Tibial artery (tissue), 4 donors: ENCODE measurements at regions of chr1 and their contacts with region 1.

Region 1: DNA sequence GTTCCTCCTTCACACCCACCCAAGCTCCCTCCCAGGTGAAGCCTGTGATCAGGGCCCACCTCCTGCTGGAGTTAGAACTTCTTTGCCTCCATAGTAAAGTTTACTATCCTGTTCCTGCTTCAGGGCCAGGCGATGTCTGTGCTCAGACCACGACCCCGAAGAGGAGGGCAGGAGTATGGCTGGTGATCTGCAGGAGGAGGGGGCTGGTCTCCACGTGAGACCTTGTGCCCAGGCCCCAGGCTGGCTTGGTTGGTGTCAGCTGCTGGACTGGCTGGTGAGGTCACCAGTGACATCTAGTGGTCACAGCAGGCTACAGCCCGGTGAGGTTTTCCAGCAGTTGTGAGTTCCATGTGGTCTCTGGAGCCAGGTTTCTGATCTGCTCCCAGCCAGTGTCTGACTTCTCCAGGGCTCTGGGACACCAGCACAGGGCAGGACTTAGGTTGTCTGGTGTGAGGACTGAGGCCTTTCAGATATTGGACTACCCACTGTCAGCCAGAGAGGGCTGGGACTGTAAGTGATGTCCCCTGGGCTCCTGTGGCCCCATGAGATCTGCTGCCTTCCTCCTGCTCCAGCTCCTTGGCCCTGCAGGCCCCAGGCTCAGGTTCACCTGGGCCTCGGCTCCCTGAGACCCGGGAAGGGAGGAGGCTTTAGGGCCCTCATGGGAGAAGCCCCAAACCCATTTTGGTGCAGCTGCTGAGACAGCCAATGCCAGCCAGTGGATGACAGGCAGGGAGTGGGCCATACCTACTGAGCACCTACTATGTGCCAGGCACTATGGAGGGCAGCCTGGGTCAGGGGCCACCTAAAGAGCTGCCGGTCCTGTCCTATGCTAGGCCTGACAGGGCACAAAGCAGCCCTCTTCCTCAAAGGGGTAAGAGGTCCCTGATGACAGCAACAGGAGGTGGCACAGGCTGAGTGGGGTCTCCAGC is 6.0 kb upstream of the UBL4B start:
- DNase-seq: peak; percentile 59 to 80
- H3K4me3 ChIP-seq: no peak overlapping the region
- H3K27ac ChIP-seq: no peak overlapping the region
- H3K4me1 ChIP-seq: no peaks in the 10 kb centered on the region
- H3K27me3 ChIP-seq: peaks cover 0 to 6% of the 10 kb centered on the region in 2 donors
- CTCF ChIP-seq: peak; percentile 85 to 94

Region 2: DNA sequence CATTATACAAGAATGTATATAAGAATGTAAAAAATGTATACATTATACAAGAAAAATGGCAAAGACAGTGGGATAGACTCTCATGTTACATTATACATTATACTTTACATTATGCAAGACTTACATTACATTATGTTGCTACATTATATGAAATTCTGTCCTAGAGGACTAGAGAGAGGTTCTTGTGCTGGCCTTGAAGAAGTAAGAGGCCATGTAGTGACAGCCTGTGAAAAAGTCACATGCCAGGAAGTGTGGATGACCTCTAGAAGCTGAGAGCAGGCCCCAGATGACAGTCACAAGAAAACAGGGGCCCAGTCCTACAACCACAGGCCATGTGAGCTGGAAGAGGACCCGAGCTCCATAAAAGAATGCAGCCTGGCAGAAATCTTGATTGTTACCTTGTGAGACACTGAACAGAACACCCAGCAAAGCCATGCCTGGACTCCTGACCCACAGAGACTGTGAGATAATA is 152.2 kb before region 1 on chr1:
- intact Hi-C with region 1: no loop called
- DNase-seq: no peak
- H3K4me3 ChIP-seq: no peak overlapping the region
- H3K27ac ChIP-seq: no peak overlapping the region
- H3K4me1 ChIP-seq: no peaks in the 10 kb centered on the region
- H3K27me3 ChIP-seq: no peaks in the 10 kb centered on the region
- CTCF ChIP-seq: no peak

Region 3: DNA sequence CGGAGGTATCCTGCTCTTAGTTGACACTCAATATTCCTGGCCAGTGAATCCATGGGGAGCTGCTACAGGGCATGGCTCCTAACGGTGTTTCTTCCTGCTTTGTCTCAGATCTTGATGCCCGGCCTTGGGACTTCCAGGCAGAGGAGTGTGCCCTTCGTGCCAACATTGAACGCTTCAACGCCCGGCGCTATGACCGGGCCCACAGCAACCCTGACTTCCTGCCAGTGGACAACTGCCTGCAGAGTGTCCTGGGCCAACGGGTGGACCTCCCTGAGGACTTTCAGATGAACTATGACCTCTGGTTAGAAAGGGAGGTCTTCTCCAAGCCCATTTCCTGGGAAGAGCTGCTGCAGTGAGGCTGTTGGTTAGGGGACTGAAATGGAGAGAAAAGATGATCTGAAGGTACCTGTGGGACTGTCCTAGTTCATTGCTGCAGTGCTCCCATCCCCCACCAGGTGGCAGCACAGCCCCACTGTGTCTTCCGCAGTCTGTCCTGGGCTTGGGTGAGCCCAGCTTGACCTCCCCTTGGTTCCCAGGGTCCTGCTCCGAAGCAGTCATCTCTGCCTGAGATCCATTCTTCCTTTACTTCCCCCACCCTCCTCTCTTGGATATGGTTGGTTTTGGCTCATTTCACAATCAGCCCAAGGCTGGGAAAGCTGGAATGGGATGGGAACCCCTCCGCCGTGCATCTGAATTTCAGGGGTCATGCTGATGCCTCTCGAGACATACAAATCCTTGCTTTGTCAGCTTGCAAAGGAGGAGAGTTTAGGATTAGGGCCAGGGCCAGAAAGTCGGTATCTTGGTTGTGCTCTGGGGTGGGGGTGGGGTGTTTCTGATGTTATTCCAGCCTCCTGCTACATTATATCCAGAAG is 52.5 kb before region 1 on chr1:
- intact Hi-C with region 1: loop called (anchors 2 kb)
- DNase-seq: peak in 1 of 2 donors; percentile 71
- H3K4me3 ChIP-seq: no peak overlapping the region
- H3K27ac ChIP-seq: no peak overlapping the region
- H3K4me1 ChIP-seq: peaks cover 0 to 5% (median 0%) of the 10 kb centered on the region in 4 donors
- H3K27me3 ChIP-seq: no peaks in the 10 kb centered on the region
- CTCF ChIP-seq: peak; percentile 85 to 95